ENCODE measurements at regions of chr7 and their contacts with region 1.

Region 1: DNA sequence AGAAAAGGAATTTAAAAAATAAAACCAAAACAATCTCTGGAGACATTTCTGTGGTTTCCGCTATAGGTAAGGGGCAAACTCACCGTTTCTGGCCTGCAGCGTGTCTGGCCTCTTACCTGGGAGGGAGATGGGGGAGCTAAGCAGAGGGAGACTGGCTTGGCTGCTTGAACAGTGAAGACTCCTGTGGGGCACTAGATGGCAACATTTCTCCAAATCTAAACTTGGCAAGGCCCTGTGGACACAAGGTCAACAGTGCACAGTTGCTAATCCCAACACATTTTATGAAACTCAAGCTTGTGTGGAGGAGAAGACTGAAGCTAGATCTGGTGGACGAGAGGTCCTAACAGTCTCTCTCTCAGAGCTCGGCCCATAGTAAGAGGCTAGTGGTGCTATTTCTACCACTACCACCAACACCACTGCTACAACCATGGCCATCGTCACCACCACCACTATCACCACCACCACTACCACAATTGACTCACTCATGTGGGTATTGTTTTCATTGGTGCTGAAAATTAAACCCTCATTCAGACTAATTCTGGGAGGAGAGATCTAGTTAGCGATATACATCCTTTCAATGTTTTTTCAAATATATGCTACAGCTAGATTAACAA is 28.4 kb upstream of the CDHR3 start:
- DNase-seq: peak in 2 of 9 experiments; percentile 11 to 49
- ATAC-seq: no peak
- H3K4me3 ChIP-seq: no peak overlapping the region
- H3K4me3 Mint-ChIP-seq: no peak overlapping the region
- H3K27ac ChIP-seq: no peak overlapping the region
- H3K27ac Mint-ChIP-seq: no peak overlapping the region
- H3K4me1 ChIP-seq: no peaks in the 10 kb centered on the region
- H3K4me1 Mint-ChIP-seq: peaks cover 8% of the 10 kb centered on the region
- H3K27me3 ChIP-seq: no peaks in the 10 kb centered on the region
- H3K27me3 Mint-ChIP-seq: no peaks in the 10 kb centered on the region
- CTCF ChIP-seq: no peak

Region 2: GRCh38 chr7:106001886-106002285 is 67.2 kb after region 1 on chr7:
- CTCF ChIA-PET with region 1: interaction called, 3 read pairs
- POLR2A ChIA-PET with region 1: no interaction called
- intact Hi-C with region 1: loop called in 1 of 2 experiments (anchors 5 kb)
- DNase-seq: no peak
- ATAC-seq: no peak
- H3K4me3 ChIP-seq: no peak overlapping the region
- H3K4me3 Mint-ChIP-seq: no peak overlapping the region
- H3K27ac ChIP-seq: no peak overlapping the region
- H3K27ac Mint-ChIP-seq: no peak overlapping the region
- H3K4me1 ChIP-seq: no peaks in the 10 kb centered on the region
- H3K4me1 Mint-ChIP-seq: no peaks in the 10 kb centered on the region
- H3K27me3 ChIP-seq: no peaks in the 10 kb centered on the region
- H3K27me3 Mint-ChIP-seq: no peaks in the 10 kb centered on the region
- CTCF ChIP-seq: no peak

Region 3: DNA sequence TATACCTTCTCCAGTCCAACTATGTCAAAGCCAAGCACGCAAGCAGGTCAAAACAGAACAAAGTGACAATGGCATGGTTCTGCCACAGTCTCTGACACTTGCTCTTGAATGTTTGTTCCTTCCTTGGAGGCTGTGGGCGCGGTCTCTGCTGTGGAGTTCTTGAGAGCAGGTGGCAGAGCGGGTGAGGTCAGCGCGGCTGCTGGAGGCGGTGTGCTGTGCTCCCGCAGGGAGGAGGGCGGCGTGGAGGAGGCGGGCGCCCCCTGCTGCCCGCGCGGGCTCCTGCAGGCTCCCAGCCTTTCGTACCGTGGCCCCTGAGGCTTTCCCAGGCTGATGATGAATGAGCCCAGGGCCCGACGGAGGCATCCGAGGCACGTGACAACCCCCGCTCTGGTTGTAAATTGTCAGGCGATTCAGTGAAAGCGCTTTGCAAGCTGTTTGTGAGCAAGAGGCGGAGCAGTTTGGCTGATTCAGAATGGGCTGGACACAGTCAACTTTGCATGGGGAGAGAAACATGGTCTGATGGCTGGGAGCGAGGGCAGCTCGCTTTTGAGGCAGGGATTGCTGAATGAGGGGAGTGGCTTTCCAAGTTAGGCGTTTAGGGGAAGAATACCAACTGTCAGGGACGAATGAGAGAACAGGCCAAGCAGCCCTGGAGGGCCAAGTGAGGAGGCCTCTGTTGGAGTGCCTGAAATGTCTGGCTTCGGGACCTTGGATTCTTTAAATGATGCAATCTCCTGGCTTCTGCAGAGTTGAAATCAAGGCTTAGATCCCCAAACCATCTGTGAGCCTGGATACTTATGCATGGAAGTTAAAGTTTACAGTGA is 74.9 kb after region 1 on chr7:
- CTCF ChIA-PET with region 1: interaction called, 4 read pairs
- POLR2A ChIA-PET with region 1: no interaction called
- intact Hi-C with region 1: loop called (anchors 2 to 5 kb)
- DNase-seq: peak; percentile 61 to 89 (median 87)
- ATAC-seq: peak; percentile 98
- H3K4me3 ChIP-seq: no peak overlapping the region
- H3K4me3 Mint-ChIP-seq: peak overlapping the region; percentile 16
- H3K27ac ChIP-seq: no peak overlapping the region
- H3K27ac Mint-ChIP-seq: peak overlapping the region; percentile 18
- H3K4me1 ChIP-seq: peaks cover 32% of the 10 kb centered on the region
- H3K4me1 Mint-ChIP-seq: peaks cover 36% of the 10 kb centered on the region
- H3K27me3 ChIP-seq: no peaks in the 10 kb centered on the region
- H3K27me3 Mint-ChIP-seq: no peaks in the 10 kb centered on the region
- CTCF ChIP-seq: peak; percentile 91

Measured in CD8-positive, alpha-beta T cell (primary cell).